ENCODE measurements at regions of chr6 and their contacts with region 1.

Region 1: DNA sequence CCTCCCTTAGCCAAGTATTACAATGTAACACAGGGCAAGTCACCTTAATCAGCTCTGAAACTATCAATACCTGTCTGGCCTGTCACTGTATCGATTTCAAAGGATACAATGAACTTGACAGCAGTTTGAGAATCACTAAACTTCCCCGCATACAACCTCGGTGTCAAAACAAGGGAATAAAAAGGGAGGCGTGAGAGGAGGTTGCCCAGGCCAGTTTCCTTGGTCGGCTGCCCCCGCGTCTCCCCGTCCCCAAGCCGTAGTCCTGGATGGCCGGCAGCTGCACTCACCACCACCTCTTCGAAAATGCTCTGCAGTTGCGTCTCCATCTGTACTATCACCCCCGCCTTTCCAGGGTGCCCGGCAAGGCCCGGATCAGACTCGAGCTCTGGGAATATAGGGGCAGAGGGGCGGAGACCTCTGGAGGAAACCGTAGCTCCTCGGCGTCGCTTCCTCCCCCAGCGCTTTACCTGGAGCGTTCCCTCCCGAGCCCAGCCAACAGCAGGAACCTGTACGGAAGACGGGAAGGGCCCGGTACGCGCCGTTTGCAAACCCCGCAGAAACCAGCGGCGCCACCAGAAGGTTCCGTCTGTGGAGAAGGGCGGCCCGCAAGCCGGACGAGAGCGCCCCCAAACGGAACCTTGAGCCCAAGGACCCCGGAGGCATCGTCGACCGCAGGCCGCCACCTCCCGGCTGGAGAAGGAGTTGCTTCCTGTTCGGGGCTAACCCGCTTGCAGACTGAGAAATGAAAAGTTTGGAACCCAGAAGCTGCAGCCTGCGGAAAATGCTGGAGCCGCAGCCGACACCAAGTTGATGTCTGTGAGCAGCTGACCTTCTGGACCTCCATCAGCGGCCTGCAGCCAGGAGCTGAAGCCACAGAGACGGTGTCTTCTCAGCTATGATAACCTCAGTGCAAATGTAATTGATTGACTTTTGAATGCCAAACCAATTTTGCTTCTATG is at the start of gene MED23:
- DNase-seq: peak; percentile 94 to 98 (median 96)
- ATAC-seq: peak; percentile 98
- H3K4me3 ChIP-seq: peak within 1 kb of the TSS; percentile 73
- H3K27ac ChIP-seq: peak within 1 kb of the TSS; percentile 6
- H3K4me1 ChIP-seq: no peaks in the 10 kb centered on the region
- H3K27me3 ChIP-seq: no peaks in the 10 kb centered on the region
- total RNA-seq, gene MED23: 12.1 to 15.3 (median 13.2) TPM

Region 2: GRCh38 chr6:131586543-131586942 is 41.5 kb before region 1 on chr6:
- intact Hi-C with region 1: loop called in 1 of 4 experiments (anchors 5 kb)
- DNase-seq: no peak
- ATAC-seq: no peak
- H3K4me3 ChIP-seq: no peak overlapping the region
- H3K27ac ChIP-seq: no peak overlapping the region
- H3K4me1 ChIP-seq: no peaks in the 10 kb centered on the region
- H3K27me3 ChIP-seq: no peaks in the 10 kb centered on the region

Measured in right cardiac atrium (tissue), 5 donors.